A549 (cell line): ENCODE measurements at regions of chr15 and their contacts with region 1.

Region 1: DNA sequence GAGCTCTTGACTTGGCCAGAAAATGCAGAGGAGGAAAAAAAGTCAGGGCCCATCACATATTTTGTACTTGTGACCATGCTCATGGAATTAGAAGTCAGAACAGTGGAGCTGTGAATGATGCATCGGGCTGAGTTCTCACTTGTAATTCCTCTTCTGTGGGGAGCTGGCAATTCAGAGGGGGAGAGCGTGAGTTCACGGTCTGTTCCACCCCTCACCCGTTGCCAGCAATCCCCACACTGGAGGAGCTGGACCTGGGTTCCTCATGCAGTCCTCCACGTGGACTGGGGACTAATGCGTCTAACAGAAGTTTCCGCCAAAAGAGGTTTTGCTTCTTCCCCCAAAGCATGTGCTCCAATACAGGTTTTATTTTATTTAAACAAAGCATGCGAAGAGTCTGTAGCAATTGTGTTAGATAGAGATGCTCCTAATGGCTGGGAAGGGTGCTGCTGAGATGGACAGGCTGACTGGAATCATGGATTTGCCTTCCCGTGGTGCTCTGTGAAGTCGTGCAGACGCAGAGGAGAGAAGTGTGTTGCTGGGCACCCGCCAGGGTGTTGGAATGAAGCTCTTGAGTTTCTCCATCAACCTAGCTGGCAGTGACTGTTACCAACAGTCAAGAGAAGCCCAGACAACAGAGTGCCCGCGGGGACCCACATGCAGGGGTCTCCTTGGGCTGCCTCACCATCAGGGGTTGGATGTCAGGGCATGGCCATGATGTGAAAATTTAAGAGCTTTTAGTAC is 77.4 kb upstream of the PCSK6 start:
- DNase-seq: no peak
- ATAC-seq: no peak
- H3K4me3 ChIP-seq: no peak overlapping the region
- H3K27ac ChIP-seq: no peak overlapping the region
- H3K4me1 ChIP-seq: peaks cover 13% of the 10 kb centered on the region; the same call in 2 of the 3 replicates
- CTCF ChIP-seq: no peak
- EP300 ChIP-seq: no peak
- POLR2A ChIP-seq: no peak
- RAD21 ChIP-seq: no peak

Region 2: GRCh38 chr15:101469520-101470288 is 97.2 kb before region 1 on chr15:
- CTCF ChIA-PET with region 1: no interaction called
- POLR2A ChIA-PET with region 1: no interaction called
- DNase-seq: no peak
- ATAC-seq: no peak
- H3K4me3 ChIP-seq: no peak overlapping the region
- H3K27ac ChIP-seq: no peak overlapping the region
- H3K4me1 ChIP-seq: no peaks in the 10 kb centered on the region
- CTCF ChIP-seq: no peak
- EP300 ChIP-seq: no peak
- POLR2A ChIP-seq: no peak
- RAD21 ChIP-seq: no peak

Region 3: DNA sequence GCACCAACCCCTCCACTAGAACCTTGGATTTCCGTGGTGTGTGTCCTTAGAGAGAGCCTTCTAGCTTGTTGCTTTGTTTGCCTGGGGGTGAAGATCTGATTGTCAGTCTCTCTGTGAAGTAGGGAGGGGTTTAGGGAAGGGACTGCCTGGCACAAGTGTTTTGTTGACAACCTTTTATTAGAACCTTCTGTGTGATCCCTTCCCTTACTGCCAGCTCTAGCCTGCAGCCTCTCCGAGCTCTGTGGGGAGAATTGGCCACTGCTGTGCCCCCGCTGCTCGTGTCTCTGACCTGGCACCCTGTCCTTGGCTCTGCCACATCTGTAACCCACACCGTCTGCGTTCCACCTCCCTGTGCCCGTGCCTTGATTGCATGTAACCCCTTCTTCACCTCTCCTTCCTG is 46.5 kb before region 1 on chr15:
- CTCF ChIA-PET with region 1: no interaction called
- POLR2A ChIA-PET with region 1: no interaction called
- DNase-seq: no peak
- ATAC-seq: no peak
- H3K4me3 ChIP-seq: no peak overlapping the region
- H3K27ac ChIP-seq: no peak overlapping the region
- H3K4me1 ChIP-seq: no peaks in the 10 kb centered on the region
- CTCF ChIP-seq: no peak
- EP300 ChIP-seq: no peak
- POLR2A ChIP-seq: no peak
- RAD21 ChIP-seq: no peak

Region 4: DNA sequence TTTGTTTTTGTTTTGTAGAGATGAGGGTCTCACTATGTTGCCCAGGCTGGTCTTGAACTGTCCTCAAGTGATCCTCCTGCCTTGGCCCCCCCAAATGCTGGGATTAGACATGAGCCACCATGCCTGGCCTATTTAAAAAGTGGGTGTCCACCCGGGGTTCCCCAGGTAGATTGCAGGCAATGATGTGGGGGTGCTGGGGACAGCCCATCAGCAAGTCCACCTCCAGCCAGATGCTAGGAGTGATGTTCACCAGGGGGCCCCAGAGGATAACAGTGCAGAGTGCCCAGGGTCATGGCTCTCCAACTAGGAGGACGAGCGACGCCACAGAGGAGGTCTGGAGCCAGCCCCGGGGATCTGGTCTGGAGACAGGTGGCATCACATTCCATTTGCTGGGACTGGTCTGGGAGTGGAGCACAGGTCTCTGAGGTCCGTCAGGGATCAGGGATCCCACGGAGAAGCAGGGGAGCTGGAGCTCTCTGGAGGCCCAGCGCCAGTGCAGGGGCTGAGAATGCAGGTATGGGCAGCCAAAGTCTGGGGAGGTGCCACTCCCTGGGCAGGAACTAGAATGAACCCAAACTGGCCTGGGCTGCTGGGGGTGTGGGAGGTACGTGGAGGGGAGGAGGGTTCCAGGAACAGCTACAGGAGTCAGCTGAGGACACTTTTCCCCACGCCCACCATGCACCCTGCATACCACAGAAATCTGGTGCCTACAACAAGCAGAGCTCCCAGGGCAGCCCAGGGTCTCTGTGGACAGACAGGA is 26.3 kb before region 1 on chr15:
- CTCF ChIA-PET with region 1: no interaction called
- POLR2A ChIA-PET with region 1: no interaction called
- DNase-seq: peak in 1 of 2 experiments; percentile 27
- ATAC-seq: peak; percentile 44 to 73
- H3K4me3 ChIP-seq: no peak overlapping the region
- H3K27ac ChIP-seq: no peak overlapping the region
- H3K4me1 ChIP-seq: no peaks in the 10 kb centered on the region
- CTCF ChIP-seq: 0 out of 3 replicates have a peak, but pooled peaks have one; percentile 10
- EP300 ChIP-seq: no peak
- POLR2A ChIP-seq: no peak
- RAD21 ChIP-seq: peak; percentile 50 to 67

Region 5: GRCh38 chr15:101578437-101578894 is 11.5 kb after region 1 on chr15:
- CTCF ChIA-PET with region 1: interaction called, 11 read pairs
- POLR2A ChIA-PET with region 1: no interaction called
- DNase-seq: peak; percentile 70 to 88
- ATAC-seq: peak; percentile 83 to 90
- H3K4me3 ChIP-seq: no peak overlapping the region
- H3K27ac ChIP-seq: peak overlapping the region; percentile 38 to 67; a peak in 4 of 6 replicates
- H3K4me1 ChIP-seq: peaks cover 31% of the 10 kb centered on the region
- CTCF ChIP-seq: peak; percentile 54
- EP300 ChIP-seq: no peak
- POLR2A ChIP-seq: no peak
- RAD21 ChIP-seq: peak; percentile 62 to 74